CD8-positive, alpha-beta T cell (primary cell): ENCODE measurements at regions of chr6 and their contacts with region 1.

Region 1: GRCh38 chr6:121055572-121056163 is 278.6 kb downstream of the TBC1D32 start:
- DNase-seq: peak in 2 of 9 experiments; percentile 35 to 45
- ATAC-seq: no peak
- H3K4me3 ChIP-seq: no peak overlapping the region
- H3K4me3 Mint-ChIP-seq: no peak overlapping the region
- H3K27ac ChIP-seq: no peak overlapping the region
- H3K27ac Mint-ChIP-seq: no peak overlapping the region
- H3K4me1 ChIP-seq: no peaks in the 10 kb centered on the region
- H3K4me1 Mint-ChIP-seq: no peaks in the 10 kb centered on the region
- H3K27me3 ChIP-seq: no peaks in the 10 kb centered on the region
- H3K27me3 Mint-ChIP-seq: no peaks in the 10 kb centered on the region
- CTCF ChIP-seq: peak; percentile 67

Region 2: GRCh38 chr6:121086876-121087275 is 31.2 kb after region 1 on chr6:
- CTCF ChIA-PET with region 1: no interaction called
- POLR2A ChIA-PET with region 1: no interaction called
- intact Hi-C with region 1: no loop called
- DNase-seq: no peak
- ATAC-seq: no peak
- H3K4me3 ChIP-seq: no peak overlapping the region
- H3K4me3 Mint-ChIP-seq: no peak overlapping the region
- H3K27ac ChIP-seq: no peak overlapping the region
- H3K27ac Mint-ChIP-seq: no peak overlapping the region
- H3K4me1 ChIP-seq: no peaks in the 10 kb centered on the region
- H3K4me1 Mint-ChIP-seq: no peaks in the 10 kb centered on the region
- H3K27me3 ChIP-seq: no peaks in the 10 kb centered on the region
- H3K27me3 Mint-ChIP-seq: no peaks in the 10 kb centered on the region
- CTCF ChIP-seq: no peak

Region 3: GRCh38 chr6:121305957-121306607 is 250.4 kb after region 1 on chr6:
- CTCF ChIA-PET with region 1: no interaction called
- POLR2A ChIA-PET with region 1: no interaction called
- intact Hi-C with region 1: loop called in 1 of 2 experiments (anchors 1 kb)
- DNase-seq: peak in 2 of 9 experiments; percentile 28 to 38
- ATAC-seq: no peak
- H3K4me3 ChIP-seq: no peak overlapping the region
- H3K4me3 Mint-ChIP-seq: no peak overlapping the region
- H3K27ac ChIP-seq: no peak overlapping the region
- H3K27ac Mint-ChIP-seq: no peak overlapping the region
- H3K4me1 ChIP-seq: no peaks in the 10 kb centered on the region
- H3K4me1 Mint-ChIP-seq: no peaks in the 10 kb centered on the region
- H3K27me3 ChIP-seq: no peaks in the 10 kb centered on the region
- H3K27me3 Mint-ChIP-seq: no peaks in the 10 kb centered on the region
- CTCF ChIP-seq: peak; percentile 59

Region 4: GRCh38 chr6:121399966-121400365 is 344.3 kb after region 1 on chr6:
- CTCF ChIA-PET with region 1: interaction called, 3 read pairs
- POLR2A ChIA-PET with region 1: no interaction called
- intact Hi-C with region 1: loop called in 1 of 2 experiments (anchors 2 kb)
- DNase-seq: no peak
- ATAC-seq: no peak
- H3K4me3 ChIP-seq: no peak overlapping the region
- H3K4me3 Mint-ChIP-seq: no peak overlapping the region
- H3K27ac ChIP-seq: no peak overlapping the region
- H3K27ac Mint-ChIP-seq: no peak overlapping the region
- H3K4me1 ChIP-seq: no peaks in the 10 kb centered on the region
- H3K4me1 Mint-ChIP-seq: no peaks in the 10 kb centered on the region
- H3K27me3 ChIP-seq: no peaks in the 10 kb centered on the region
- H3K27me3 Mint-ChIP-seq: peaks cover 4% of the 10 kb centered on the region
- CTCF ChIP-seq: no peak

Region 5: GRCh38 chr6:121849477-121849876 is 793.8 kb after region 1 on chr6:
- CTCF ChIA-PET with region 1: interaction called, 3 read pairs
- POLR2A ChIA-PET with region 1: no interaction called
- intact Hi-C with region 1: loop called (anchors 5 kb)
- DNase-seq: peak in 3 of 9 experiments; percentile 11 to 51 (median 15)
- ATAC-seq: no peak
- H3K4me3 ChIP-seq: no peak overlapping the region
- H3K4me3 Mint-ChIP-seq: no peak overlapping the region
- H3K27ac ChIP-seq: no peak overlapping the region
- H3K27ac Mint-ChIP-seq: no peak overlapping the region
- H3K4me1 ChIP-seq: no peaks in the 10 kb centered on the region
- H3K4me1 Mint-ChIP-seq: peaks cover 7% of the 10 kb centered on the region
- H3K27me3 ChIP-seq: no peaks in the 10 kb centered on the region
- H3K27me3 Mint-ChIP-seq: peaks cover 2% of the 10 kb centered on the region
- CTCF ChIP-seq: no peak

Region 6: DNA sequence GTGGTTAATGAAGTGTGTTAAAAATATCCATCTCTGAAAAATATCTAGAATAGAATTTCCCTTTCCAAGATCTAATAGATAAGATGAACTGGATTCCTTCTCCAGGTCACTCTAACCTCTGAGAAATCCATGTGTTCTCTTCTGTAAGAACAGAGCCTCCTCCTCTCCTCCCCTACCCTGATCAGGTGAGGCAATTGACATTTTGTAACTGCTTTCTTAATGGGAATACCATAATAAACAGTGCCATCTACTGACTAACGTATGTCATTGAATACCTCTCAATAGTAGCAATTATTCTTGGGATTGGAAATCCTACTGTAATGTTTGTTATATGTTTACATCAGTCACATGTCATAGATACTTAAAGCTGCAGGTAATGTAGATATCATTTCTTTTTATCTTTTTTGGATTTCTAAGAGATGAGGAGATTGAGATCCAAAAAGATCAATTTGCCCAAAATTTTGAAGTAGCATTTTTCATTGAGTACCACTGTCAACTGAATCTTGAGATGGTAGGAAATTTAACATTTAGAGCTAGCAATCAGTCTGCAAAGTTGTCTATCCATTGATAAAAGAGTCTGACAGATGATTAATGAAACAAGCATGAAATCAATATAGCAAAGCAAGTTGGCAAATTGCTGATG is 978.0 kb after region 1 on chr6:
- CTCF ChIA-PET with region 1: interaction called, 6 read pairs
- POLR2A ChIA-PET with region 1: no interaction called
- intact Hi-C with region 1: loop called (anchors 1 kb)
- DNase-seq: peak in 2 of 9 experiments; percentile 23 to 52
- ATAC-seq: peak; percentile 62
- H3K4me3 ChIP-seq: no peak overlapping the region
- H3K4me3 Mint-ChIP-seq: no peak overlapping the region
- H3K27ac ChIP-seq: no peak overlapping the region
- H3K27ac Mint-ChIP-seq: no peak overlapping the region
- H3K4me1 ChIP-seq: no peaks in the 10 kb centered on the region
- H3K4me1 Mint-ChIP-seq: no peaks in the 10 kb centered on the region
- H3K27me3 ChIP-seq: no peaks in the 10 kb centered on the region
- H3K27me3 Mint-ChIP-seq: peaks cover 3% of the 10 kb centered on the region
- CTCF ChIP-seq: peak; percentile 59